ENCODE measurements at regions of chr15 and their contacts with region 1.

Region 1: GRCh38 chr15:63487076-63487757 is 17.2 kb upstream of the USP3 start:
- DNase-seq: peak; percentile 79
- H3K4me3 ChIP-seq: no peak overlapping the region
- H3K27ac ChIP-seq: no peak overlapping the region
- H3K4me1 ChIP-seq: peaks cover 14% of the 10 kb centered on the region
- H3K27me3 ChIP-seq: peaks cover 0 to 2% of the 10 kb centered on the region in 2 experiments
- CTCF ChIP-seq: peak; percentile 98
- POLR2A ChIP-seq: no peak

Region 2: DNA sequence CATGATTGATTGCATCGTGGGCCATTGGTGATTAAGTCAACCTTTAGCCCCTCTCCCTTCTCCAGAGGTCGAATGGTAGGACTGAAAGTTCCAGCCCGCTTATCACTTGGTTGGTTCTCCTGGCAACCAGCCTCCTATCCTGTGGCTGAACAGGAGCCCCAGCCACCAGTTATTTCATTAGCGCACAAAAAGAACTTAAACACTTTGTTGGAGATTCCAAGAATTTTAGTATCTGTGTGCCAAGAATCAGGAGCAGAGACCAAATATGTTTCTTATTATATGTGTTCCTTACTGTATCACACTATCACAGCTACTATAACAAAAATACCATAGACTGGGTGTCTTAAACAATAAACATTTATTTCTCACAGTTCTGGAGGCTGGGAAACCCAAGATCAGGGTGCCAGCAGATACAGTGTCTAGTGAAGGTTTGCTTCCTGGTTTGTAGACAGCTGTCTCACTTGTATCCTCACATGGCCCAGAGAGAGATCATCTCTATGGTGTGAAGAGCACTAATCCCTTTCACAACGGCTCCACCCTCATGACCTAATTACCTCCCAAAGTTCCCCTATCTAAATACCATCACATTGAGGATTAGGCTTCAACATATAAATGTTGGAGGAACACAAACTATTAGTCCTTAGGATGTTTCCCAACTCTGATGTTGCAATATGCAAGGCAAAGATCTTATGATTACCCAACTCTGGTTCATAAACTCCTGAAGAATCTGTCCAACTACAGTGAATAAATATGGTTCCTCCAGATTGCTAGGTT is 240.3 kb before region 1 on chr15:
- CTCF ChIA-PET with region 1: no interaction called
- POLR2A ChIA-PET with region 1: no interaction called
- dilution Hi-C with region 1: no loop called
- intact Hi-C with region 1: no loop called
- DNase-seq: no peak
- H3K4me3 ChIP-seq: no peak overlapping the region
- H3K27ac ChIP-seq: no peak overlapping the region
- H3K4me1 ChIP-seq: peaks cover 21% of the 10 kb centered on the region
- H3K27me3 ChIP-seq: no peaks in the 10 kb centered on the region
- CTCF ChIP-seq: no peak
- POLR2A ChIP-seq: no peak

Region 3: GRCh38 chr15:63396152-63396928 is 90.9 kb before region 1 on chr15:
- CTCF ChIA-PET with region 1: no interaction called
- POLR2A ChIA-PET with region 1: no interaction called
- dilution Hi-C with region 1: no loop called
- intact Hi-C with region 1: no loop called
- DNase-seq: no peak
- H3K4me3 ChIP-seq: no peak overlapping the region
- H3K27ac ChIP-seq: no peak overlapping the region
- H3K4me1 ChIP-seq: no peaks in the 10 kb centered on the region
- H3K27me3 ChIP-seq: no peaks in the 10 kb centered on the region
- CTCF ChIP-seq: no peak
- POLR2A ChIP-seq: no peak

Region 4: GRCh38 chr15:63497642-63498467 is 10.6 kb after region 1 on chr15:
- CTCF ChIA-PET with region 1: interaction called, 76 read pairs
- POLR2A ChIA-PET with region 1: no interaction called
- dilution Hi-C with region 1: no loop called
- intact Hi-C with region 1: loop called (anchors 1 kb)
- DNase-seq: no peak
- H3K4me3 ChIP-seq: no peak overlapping the region
- H3K27ac ChIP-seq: no peak overlapping the region
- H3K4me1 ChIP-seq: peaks cover 19% of the 10 kb centered on the region
- H3K27me3 ChIP-seq: peaks cover 4 to 5% of the 10 kb centered on the region in 2 experiments
- CTCF ChIP-seq: no peak
- POLR2A ChIP-seq: no peak

Region 5: GRCh38 chr15:63600616-63601025 is 113.4 kb after region 1 on chr15:
- CTCF ChIA-PET with region 1: interaction called, 17 read pairs
- POLR2A ChIA-PET with region 1: no interaction called
- dilution Hi-C with region 1: no loop called
- intact Hi-C with region 1: loop called (anchors 1 kb)
- DNase-seq: peak; percentile 94
- H3K4me3 ChIP-seq: peak overlapping the region; percentile 56 to 82 (median 71)
- H3K27ac ChIP-seq: no peak overlapping the region
- H3K4me1 ChIP-seq: peaks cover 11% of the 10 kb centered on the region
- H3K27me3 ChIP-seq: no peaks in the 10 kb centered on the region
- CTCF ChIP-seq: peak in 1 of 2 donors; percentile 20
- POLR2A ChIP-seq: peak; percentile 95

Measured in endothelial cell of umbilical vein (primary cell).